ENCODE measurements at regions of chr17 and their contacts with region 1.

Region 1: DNA sequence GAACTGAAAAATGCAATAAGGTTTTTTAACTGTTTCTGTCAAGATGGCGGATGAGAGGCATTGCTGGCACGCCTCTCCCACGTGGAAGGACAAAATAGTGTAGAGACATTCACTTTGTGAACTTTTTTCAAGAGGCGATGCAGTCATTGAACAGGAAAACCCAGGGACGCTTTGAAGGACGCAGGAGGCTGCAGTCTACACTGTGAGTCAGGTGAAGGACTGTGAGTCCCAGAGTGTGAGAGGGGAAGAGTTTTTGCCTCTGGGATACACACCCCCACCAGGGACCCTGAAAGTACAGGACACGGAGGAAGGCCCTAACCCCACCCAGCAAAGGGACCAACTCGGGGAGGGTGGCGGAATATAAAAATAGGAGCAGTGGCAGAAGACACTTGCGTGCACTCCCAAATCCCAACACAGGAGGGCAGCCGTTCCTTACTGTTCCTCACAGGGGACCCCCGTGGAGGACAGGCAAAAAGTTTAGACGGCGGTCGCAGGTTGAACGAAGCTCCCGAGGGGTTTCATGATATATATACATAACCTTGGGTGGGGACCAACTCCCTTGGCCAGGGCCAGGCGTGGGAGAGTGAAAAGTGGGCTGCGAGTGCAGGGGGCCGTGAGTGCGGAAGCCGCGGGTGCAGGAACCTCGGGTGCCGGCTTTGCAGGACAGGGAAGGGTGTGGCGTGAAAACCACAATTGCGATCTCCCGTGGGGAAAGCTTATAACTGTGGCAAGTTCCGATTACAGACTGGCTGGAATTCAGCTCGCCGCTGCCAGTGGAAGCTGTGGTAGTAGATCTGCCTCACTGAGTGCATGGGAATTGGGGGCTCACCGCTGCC is 82.0 kb upstream of the ALOX12 start:
- DNase-seq: peak; percentile 69 to 80 (median 70)
- ATAC-seq: peak; percentile 81
- H3K4me3 ChIP-seq: no peak overlapping the region
- H3K27ac ChIP-seq: peak overlapping the region; percentile 12; the same call in 1 of the 3 replicates
- H3K4me1 ChIP-seq: peaks cover 23 to 46% of the 10 kb centered on the region in 2 experiments
- H3K27me3 ChIP-seq: no peaks in the 10 kb centered on the region
- CTCF ChIP-seq: peak; percentile 80 to 84 (median 83)
- EP300 ChIP-seq: no peak
- POLR2A ChIP-seq: no peak
- RAD21 ChIP-seq: peak; percentile 81 to 89

Region 2: GRCh38 chr17:6666077-6666521 is 247.7 kb before region 1 on chr17:
- CTCF ChIA-PET with region 1: no interaction called
- POLR2A ChIA-PET with region 1: no interaction called
- in situ Hi-C with region 1: no loop called
- intact Hi-C with region 1: loop called (anchors 2 kb)
- DNase-seq: peak; percentile 54 to 74 (median 62)
- ATAC-seq: peak; percentile 93
- H3K4me3 ChIP-seq: no peak overlapping the region
- H3K27ac ChIP-seq: no peak overlapping the region
- H3K4me1 ChIP-seq: no peaks in the 10 kb centered on the region
- H3K27me3 ChIP-seq: peaks cover 6 to 36% of the 10 kb centered on the region in 2 experiments; a peak in 4 of 5 replicates
- CTCF ChIP-seq: peak; percentile 85 to 86 (median 85)
- EP300 ChIP-seq: no peak
- POLR2A ChIP-seq: no peak
- RAD21 ChIP-seq: peak; percentile 70 to 82

Region 3: GRCh38 chr17:6843241-6843880 is 70.5 kb before region 1 on chr17:
- CTCF ChIA-PET with region 1: no interaction called
- POLR2A ChIA-PET with region 1: no interaction called
- in situ Hi-C with region 1: loop called (anchors 5 kb)
- intact Hi-C with region 1: no loop called
- DNase-seq: peak; percentile 12 to 48 (median 18)
- ATAC-seq: no peak
- H3K4me3 ChIP-seq: no peak overlapping the region
- H3K27ac ChIP-seq: no peak overlapping the region
- H3K4me1 ChIP-seq: no peaks in the 10 kb centered on the region; a peak in 2 of 5 replicates
- H3K27me3 ChIP-seq: no peaks in the 10 kb centered on the region; a peak in 2 of 5 replicates
- CTCF ChIP-seq: peak; percentile 26 to 61 (median 37); a peak in 3 of 6 replicates
- EP300 ChIP-seq: no peak
- POLR2A ChIP-seq: no peak
- RAD21 ChIP-seq: peak; percentile 48 to 75; a peak in 3 of 4 replicates

Region 4: GRCh38 chr17:6940186-6940649 is 26.4 kb after region 1 on chr17:
- CTCF ChIA-PET with region 1: no interaction called
- POLR2A ChIA-PET with region 1: interaction called, 14 read pairs
- in situ Hi-C with region 1: no loop called
- intact Hi-C with region 1: no loop called
- DNase-seq: peak; percentile 47 to 82 (median 60)
- ATAC-seq: peak; percentile 92
- H3K4me3 ChIP-seq: peak overlapping the region; percentile 60
- H3K27ac ChIP-seq: peak overlapping the region; percentile 77
- H3K4me1 ChIP-seq: peaks cover 14 to 17% of the 10 kb centered on the region in 2 experiments
- H3K27me3 ChIP-seq: no peaks in the 10 kb centered on the region
- CTCF ChIP-seq: no peak
- EP300 ChIP-seq: no peak
- POLR2A ChIP-seq: peak; percentile 92
- RAD21 ChIP-seq: no peak

Region 5: DNA sequence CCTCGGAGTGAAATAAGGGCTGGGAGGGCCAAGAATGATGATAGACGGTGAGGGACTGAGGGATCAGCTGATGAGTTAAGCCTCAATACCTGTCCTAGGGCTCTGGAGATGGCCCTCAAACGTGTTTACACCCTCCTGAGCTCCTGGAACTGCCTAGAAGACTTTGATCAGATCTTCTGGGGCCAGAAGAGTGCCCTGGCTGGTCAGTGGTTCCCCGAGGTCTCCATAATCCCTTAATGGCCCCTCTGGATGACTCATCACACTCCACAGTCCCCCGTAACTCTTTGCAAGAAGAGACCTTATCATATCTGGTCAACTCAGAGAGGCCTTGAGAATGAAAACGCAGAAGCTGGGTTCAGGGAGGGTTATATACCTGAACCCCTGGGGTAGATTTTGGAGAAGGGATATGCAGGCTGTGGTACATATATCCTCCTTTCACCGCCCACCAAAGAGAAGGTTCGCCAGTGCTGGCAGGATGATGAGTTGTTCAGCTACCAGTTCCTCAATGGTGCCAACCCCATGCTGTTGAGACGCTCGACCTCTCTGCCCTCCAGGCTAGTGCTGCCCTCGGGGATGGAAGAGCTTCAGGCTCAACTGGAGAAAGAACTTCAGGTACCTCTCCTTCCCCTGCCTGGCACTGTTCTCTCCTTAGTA is 85.2 kb after region 1 on chr17:
- CTCF ChIA-PET with region 1: interaction called, 40 read pairs
- POLR2A ChIA-PET with region 1: interaction called, 14 read pairs
- in situ Hi-C with region 1: no loop called
- intact Hi-C with region 1: loop called (anchors 1 kb)
- DNase-seq: peak; percentile 59 to 86 (median 74)
- ATAC-seq: peak; percentile 88
- H3K4me3 ChIP-seq: no peak overlapping the region
- H3K27ac ChIP-seq: peak overlapping the region; percentile 80
- H3K4me1 ChIP-seq: peaks cover 33 to 41% of the 10 kb centered on the region in 2 experiments
- H3K27me3 ChIP-seq: no peaks in the 10 kb centered on the region
- CTCF ChIP-seq: no peak
- EP300 ChIP-seq: peak; percentile 89
- POLR2A ChIP-seq: 0 out of 2 replicates have a peak, but pooled peaks have one; percentile 16
- RAD21 ChIP-seq: peak in 1 of 2 experiments; percentile 21; a peak in 2 of 4 replicates

Region 6: DNA sequence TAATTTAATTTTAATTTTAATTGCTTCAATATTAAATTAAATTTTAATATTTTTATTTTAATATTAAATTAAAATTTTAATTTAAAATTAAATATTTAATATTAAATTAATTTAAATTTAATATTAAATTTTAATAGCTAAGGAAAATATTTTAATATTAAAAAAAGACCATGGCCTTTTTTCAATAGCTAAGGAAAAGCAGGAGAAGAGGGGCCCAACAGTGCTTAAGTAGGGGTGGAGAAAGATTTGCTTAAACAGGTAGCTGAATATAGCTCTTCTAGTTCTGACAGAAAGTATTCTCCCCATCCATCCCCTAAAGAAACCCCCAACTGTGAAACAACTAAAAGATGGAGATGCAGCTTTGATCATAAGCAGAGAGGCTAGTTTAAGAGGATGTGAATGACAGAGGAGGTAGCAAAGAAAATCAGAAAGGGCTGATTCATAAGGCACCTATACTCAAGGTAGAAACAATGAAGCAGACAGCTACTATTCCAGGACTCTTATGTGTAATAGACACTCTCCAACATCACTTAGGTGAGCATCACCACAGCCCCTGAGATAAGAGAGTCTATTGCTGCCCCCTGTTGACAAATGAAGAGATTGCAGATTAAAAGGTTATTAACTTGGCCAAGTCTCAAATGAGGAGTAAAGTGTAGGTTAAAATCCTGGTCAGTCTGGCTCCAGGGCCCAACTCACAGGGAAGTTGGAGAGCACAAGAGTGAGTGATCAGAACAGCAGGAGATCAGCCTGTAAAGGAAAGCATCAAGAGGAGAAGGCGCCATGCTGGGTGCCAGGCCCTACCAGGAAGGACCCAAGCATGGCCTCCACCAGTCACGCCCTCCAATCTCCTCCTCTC is 90.8 kb after region 1 on chr17:
- CTCF ChIA-PET with region 1: interaction called, 40 read pairs
- POLR2A ChIA-PET with region 1: interaction called, 14 read pairs
- in situ Hi-C with region 1: loop called (anchors 5 kb)
- intact Hi-C with region 1: loop called (anchors 1 kb)
- DNase-seq: peak; percentile 41 to 69 (median 48)
- ATAC-seq: peak; percentile 84
- H3K4me3 ChIP-seq: no peak overlapping the region
- H3K27ac ChIP-seq: no peak overlapping the region
- H3K4me1 ChIP-seq: peaks cover 6% of the 10 kb centered on the region in 2 experiments; a peak in 4 of 5 replicates
- H3K27me3 ChIP-seq: no peaks in the 10 kb centered on the region
- CTCF ChIP-seq: peak; percentile 70 to 80 (median 72)
- EP300 ChIP-seq: no peak
- POLR2A ChIP-seq: no peak
- RAD21 ChIP-seq: peak; percentile 79 to 88

Region 7: DNA sequence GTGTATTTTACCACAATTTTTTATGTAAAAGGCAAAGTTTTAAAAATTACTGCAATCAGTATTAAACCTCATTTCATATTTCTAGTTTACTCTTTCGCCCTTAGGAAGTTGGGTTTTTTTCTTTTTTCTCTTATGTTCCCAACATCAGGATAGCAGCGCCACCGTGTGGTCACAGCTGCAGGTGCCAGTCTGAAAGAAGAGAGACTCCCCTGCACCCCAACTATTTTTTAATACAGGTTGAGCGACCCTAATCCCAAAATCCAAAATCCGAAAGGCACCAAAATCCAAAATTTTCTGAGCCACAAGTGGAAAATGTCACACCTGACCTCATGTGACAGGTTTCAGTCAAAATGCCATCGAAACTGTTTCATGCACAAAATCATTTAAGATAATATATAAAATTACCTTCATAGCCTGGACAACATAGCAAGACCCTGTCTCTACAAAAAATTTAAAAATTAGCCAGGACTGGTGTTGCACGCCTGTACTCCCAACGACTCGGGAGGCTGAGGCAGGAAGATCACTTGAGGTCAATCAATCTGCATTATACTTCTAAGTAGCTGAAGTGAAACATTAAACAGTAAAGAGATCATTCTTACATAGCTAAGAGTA is 222.5 kb after region 1 on chr17:
- CTCF ChIA-PET with region 1: no interaction called
- POLR2A ChIA-PET with region 1: no interaction called
- in situ Hi-C with region 1: no loop called
- intact Hi-C with region 1: loop called (anchors 10 kb)
- DNase-seq: peak; percentile 53 to 72 (median 68)
- ATAC-seq: no peak
- H3K4me3 ChIP-seq: no peak overlapping the region
- H3K27ac ChIP-seq: no peak overlapping the region
- H3K4me1 ChIP-seq: peaks cover 0 to 8% of the 10 kb centered on the region in 2 experiments; a peak in 2 of 5 replicates
- H3K27me3 ChIP-seq: peaks cover 16 to 41% of the 10 kb centered on the region in 2 experiments
- CTCF ChIP-seq: peak; percentile 72 to 80 (median 75)
- EP300 ChIP-seq: no peak
- POLR2A ChIP-seq: no peak
- RAD21 ChIP-seq: peak; percentile 77

Measured in K562 (cell line).